Activated B cell treated with CpG ODN at 0.5 μM for 24 hours (primary cell): ENCODE measurements at regions of chr5 and their contacts with region 1.

Region 1: DNA sequence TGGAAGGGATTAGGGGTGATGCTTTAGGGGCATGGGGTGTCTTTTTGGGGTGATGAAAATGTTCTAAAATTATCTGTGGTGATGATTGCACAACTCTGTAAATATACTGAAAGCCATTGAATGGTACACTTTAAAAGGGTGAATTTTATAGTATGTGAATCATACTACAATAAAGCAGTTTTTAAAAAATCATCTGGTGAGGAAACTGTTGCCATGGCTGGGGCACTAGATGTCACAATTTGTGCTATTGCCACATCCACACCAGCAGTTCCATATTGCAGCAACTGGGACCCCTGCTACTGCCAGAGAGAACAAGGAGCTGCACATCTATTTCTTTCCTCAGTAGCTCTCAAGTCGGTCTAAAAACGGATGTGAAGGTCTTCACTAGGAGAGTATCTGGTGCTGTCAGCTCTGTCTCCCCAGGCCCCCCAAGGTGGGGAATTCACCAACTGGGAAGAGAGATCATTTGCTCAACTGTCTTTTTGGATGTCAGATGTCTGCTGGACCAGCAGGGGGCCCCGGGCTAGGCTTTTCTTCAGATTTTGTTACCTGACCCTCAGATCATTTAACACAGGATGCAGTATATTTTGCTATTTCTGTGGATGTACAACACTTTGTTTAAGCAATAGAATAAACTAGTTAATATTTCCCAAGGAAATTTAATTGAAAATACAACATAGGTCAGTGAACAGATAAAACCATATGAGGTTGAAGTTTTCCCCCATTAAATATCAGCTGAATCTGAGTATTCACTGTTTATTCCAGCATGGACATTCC is 13.2 kb downstream of the CMYA5 start:
- DNase-seq: no peak
- ATAC-seq: no peak
- H3K4me3 Mint-ChIP-seq: no peak overlapping the region
- H3K27ac Mint-ChIP-seq: no peak overlapping the region
- H3K4me1 Mint-ChIP-seq: peaks cover 8% of the 10 kb centered on the region
- H3K27me3 Mint-ChIP-seq: no peaks in the 10 kb centered on the region
- CTCF ChIP-seq: no peak

Region 2: DNA sequence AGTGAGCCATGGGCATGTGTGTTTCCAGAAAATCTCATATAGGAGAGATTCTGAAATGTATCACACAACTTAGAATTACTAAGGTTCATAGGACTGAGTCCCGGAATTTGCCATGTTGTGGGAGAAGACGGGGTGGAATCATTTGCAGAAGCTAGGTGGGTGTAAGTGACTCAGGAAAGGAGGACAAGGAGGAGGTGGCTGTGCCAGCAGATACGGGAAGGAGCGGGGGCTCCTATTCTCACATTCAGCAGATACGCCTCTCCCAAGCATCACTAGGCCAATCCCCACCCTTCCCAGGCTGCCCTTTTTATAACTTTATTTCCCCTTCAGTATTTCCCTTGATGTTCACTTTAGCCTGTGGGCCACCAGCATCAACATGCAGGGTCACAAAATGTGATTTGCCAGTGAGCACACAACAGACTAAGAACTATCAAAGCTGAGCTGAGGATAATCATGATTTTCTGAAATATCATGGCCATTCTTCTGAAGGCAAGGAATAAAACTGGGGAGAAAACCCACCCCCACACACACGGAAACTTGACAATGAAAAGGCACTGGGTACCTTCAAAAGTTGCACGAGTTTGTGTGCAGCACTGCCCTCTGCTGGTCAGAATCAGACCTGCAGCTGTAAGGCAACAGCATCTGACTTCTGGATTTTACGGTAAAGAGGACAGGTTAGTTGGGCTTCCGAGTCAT is 155.1 kb after region 1 on chr5:
- CTCF ChIA-PET with region 1: no interaction called
- POLR2A ChIA-PET with region 1: no interaction called
- intact Hi-C with region 1: loop called (anchors 10 kb)
- DNase-seq: peak; percentile 53
- ATAC-seq: peak; percentile 47
- H3K4me3 Mint-ChIP-seq: no peak overlapping the region
- H3K27ac Mint-ChIP-seq: no peak overlapping the region
- H3K4me1 Mint-ChIP-seq: no peaks in the 10 kb centered on the region
- H3K27me3 Mint-ChIP-seq: peaks cover 10% of the 10 kb centered on the region
- CTCF ChIP-seq: no peak